Ovary (tissue), 10 donors: ENCODE measurements at regions of chr4 and their contacts with region 1.

Region 1: GRCh38 chr4:95549246-95550114 is 707 bp upstream of the UNC5C start:
- DNase-seq: peak; percentile 30 to 68 (median 56)
- H3K4me3 ChIP-seq: peak overlapping the region; percentile 73
- H3K27ac ChIP-seq: peak overlapping the region; percentile 69 to 79
- H3K4me1 ChIP-seq: no peaks in the 10 kb centered on the region
- H3K27me3 ChIP-seq: no peaks in the 10 kb centered on the region
- CTCF ChIP-seq: no peak
- EP300 ChIP-seq: no peak
- POLR2A ChIP-seq: no peak

Region 2: DNA sequence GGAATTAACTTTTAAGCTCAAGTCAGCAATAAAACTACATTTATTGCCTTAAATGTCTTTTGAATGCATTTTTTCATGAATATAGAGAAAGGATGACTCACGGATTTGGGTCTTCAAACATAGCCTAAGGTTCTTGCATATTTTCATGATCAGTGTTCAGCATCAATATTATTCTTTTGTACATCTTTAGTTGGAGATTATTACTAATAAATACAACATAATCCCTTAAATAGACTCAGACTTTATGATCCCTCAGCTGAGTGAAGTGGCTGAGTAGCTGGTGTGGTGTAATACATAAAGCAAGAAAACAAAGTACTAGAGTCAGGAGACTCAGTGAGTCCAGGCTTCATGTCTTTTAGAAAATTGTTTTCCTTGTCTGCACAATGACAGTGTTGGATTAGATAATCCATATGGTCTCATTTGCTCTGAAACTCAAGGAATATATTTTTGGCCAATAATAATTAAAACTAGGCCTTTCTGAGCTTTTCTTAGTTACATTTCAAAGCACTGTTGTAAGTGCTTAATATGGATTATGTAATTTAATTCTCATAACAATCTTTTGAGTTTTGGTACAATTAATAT is 77.6 kb after region 1 on chr4:
- intact Hi-C with region 1: loop called in 1 of 4 experiments (anchors 10 kb)
- DNase-seq: no peak
- H3K4me3 ChIP-seq: no peak overlapping the region
- H3K27ac ChIP-seq: no peak overlapping the region
- H3K4me1 ChIP-seq: no peaks in the 10 kb centered on the region
- H3K27me3 ChIP-seq: no peaks in the 10 kb centered on the region
- CTCF ChIP-seq: no peak
- EP300 ChIP-seq: no peak
- POLR2A ChIP-seq: no peak